HEK293T (cell line): ENCODE measurements at regions of chr22 and their contacts with region 1.

Region 1: DNA sequence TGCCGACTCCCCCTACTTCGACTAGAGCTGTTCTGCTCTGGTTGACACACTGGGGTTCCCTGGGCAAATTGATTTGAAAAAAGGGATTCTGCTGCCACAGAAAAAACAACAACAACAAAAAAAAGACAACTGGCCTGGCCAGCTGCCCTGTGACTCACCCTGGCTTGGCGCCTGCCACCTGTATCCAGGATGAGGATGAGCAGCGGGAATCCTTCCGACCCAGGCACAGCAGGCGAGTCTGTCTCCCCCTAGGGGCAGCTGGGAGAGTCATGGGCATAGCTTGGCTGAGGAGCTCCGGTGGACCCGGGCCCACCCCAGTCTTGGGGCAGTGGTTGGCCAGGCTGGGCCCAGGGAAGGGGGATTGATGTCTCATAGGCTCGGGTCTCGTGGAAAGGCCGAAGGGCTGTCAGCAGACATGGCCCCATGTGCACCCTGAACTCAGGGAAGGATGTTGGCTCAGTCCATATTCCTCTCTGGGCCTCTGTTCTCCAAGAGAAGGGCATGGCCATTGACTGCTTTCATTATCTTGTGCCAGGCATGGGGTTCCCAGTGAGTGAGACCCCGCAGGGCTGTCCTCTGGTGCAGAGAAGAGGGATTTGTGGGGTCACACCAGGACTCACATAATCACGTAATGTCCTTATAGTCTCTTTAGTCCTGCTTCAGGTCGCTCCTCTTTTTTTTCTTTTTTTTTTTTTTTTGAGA is 10.4 kb upstream of the SUN2 start:
- DNase-seq: peak; percentile 81

Region 2: DNA sequence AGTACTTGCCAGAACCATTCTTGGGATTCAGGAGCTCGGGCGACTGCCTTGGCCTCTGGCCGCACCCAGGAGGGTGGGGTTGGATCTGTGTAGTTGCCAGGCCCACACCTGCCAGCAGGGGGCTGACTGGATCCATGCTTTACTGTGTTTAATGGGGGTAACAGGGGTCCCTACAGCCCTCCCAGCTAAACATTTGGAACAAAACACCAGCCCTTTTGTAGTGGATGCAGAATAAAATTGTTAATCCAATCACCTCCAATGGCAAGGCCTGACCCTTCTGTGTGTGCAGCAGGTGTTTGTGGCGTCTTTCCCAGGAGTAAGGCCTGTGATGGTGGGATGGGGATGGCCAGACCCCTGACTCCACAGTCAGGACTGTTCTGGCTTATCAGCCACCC is 32.9 kb before region 1 on chr22:
- CTCF ChIA-PET with region 1: interaction called, 10 read pairs
- POLR2A ChIA-PET with region 1: no interaction called
- DNase-seq: peak; percentile 79

Region 3: DNA sequence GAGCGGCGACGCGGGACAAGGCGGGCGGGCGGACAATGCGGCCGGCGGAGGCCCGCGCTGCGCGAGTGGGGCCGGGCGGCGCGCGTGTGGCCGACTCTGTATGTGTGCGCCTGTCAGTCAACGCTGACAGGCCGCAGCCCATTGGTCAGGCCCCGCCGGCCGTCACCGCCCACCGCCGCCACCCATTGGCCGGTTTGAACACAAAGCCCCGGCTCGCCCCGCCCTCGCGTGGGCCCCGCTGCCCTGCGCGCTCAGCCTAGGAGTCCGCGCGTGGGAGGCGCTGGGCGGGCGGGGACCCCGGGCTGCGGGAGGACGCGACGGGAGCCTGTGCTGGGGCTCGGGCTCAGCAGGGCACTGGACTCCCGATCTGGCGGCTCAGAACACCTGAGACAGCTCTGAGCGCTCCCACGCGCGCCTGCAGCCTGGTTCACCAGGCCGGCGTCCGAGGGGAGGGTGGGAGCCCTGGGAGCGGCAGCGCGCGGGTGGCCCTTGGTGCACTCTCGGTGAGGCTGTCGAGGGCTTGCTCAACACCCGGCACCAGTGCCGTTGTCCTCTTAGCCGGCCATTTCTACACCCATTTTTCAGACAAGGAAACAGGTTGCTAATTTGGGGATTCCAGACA is 10.2 kb before region 1 on chr22 and contains the start of gene SUN2:
- CTCF ChIA-PET with region 1: interaction called, 43 read pairs
- POLR2A ChIA-PET with region 1: interaction called, 5 read pairs
- DNase-seq: peak; percentile 99

Region 4: GRCh38 chr22:38843201-38843715 is 77.0 kb after region 1 on chr22:
- CTCF ChIA-PET with region 1: interaction called, 14 read pairs
- POLR2A ChIA-PET with region 1: interaction called, 6 read pairs
- DNase-seq: peak; percentile 82

Region 5: GRCh38 chr22:38858492-38858891 is 92.3 kb after region 1 on chr22:
- CTCF ChIA-PET with region 1: interaction called, 13 read pairs
- POLR2A ChIA-PET with region 1: interaction called, 3 read pairs
- DNase-seq: no peak

Region 6: DNA sequence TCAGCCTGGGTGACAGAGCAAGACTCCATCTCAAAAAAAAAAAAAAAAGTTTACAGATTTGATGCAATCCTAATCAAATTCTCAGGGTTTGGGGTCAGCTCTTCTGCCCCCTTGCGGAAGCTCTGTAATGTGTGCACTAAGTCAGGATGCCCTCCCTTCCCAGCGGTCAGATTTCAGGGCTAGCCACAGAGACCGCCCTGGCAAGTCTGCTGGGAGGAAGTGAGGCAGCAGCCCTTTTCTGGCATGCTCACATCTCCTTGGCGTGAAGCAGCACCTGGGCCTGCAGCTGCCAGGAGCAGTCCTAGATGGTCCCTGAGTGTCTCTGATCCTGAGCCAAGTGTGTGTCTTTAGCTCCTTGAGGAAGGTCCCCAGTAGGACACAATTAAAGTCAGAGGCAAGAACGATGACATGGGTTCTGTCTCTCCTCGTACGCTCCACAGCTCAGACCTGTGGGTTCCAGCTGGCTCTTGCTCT is 237.0 kb after region 1 on chr22:
- CTCF ChIA-PET with region 1: interaction called, 14 read pairs
- POLR2A ChIA-PET with region 1: no interaction called
- DNase-seq: peak; percentile 88